GM12878 (cell line): ENCODE measurements at regions of chr2 and their contacts with region 1.

Region 1: DNA sequence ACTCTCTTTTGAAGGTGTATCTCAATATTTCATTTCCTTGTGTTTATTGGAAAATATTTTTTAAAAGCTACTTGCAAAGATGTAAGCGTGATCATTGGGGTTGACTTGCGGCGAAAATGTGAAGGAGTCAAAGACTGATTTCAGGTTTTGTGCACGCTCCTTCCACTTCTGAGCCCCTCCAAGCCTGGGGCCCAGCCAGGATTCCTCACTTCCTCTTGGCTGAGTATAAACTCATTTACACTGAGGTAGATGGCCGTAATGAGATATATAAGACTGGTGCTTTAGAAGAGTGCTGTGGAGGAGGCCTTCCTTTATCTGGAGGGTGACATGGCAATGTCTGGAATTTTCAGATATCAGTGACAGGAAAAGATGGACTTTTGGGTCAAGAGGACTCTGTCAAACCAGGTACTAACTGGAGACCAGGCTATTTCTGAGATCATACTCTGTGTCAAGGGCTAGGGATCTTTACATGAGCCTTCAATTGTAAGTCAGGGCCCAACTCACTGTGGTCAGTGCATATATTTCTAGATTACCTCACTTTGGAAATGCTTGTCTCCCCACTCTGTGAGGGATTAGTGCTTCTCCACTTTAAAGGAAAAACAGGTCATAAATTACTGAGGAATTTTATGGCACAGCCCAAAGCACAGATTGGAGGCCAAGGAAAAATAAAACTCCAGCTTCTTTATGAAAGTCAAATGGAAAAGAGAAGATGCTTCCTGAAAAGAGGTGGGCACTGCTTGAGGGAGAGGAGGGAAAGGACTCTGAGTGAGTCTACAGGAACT is 22.8 kb downstream of the PRKCE start:
- DNase-seq: no peak
- ATAC-seq: no peak
- H3K4me3 ChIP-seq: no peak overlapping the region
- H3K27ac ChIP-seq: no peak overlapping the region
- H3K4me1 ChIP-seq: no peaks in the 10 kb centered on the region
- H3K27me3 ChIP-seq: no peaks in the 10 kb centered on the region
- CTCF ChIP-seq: no peak
- EP300 ChIP-seq: no peak
- POLR2A ChIP-seq: no peak
- RAD21 ChIP-seq: no peak

Region 2: DNA sequence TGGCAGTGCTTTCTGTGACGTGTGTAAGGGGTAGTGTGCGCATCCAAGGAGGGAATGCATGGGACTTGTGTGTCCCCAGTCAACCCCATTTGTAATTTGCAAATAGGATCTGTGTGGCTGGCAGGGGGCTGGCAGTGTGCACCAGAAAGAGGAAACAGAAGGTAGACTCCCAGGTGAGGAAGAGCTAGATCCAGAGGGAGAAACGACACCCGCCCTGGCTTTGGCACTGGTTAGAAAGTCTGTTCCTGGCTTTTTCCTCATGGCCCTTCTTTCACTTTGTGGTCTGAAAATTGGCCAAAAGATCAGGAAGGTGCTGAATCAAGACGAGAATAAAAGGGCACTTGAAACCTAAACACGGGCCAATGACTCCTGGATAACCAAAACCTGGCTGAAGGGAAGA is 10.5 kb after region 1 on chr2:
- CTCF ChIA-PET with region 1: interaction called, 4 read pairs
- POLR2A ChIA-PET with region 1: interaction called, 5 read pairs
- RAD21 ChIA-PET with region 1: no interaction called
- SMC1A ChIA-PET with region 1: interaction called, 12 read pairs
- in situ Hi-C with region 1: no loop called
- intact Hi-C with region 1: no loop called
- DNase-seq: no peak
- ATAC-seq: no peak
- H3K4me3 ChIP-seq: no peak overlapping the region
- H3K27ac ChIP-seq: no peak overlapping the region
- H3K4me1 ChIP-seq: peaks cover 6% of the 10 kb centered on the region
- H3K27me3 ChIP-seq: no peaks in the 10 kb centered on the region
- CTCF ChIP-seq: no peak
- EP300 ChIP-seq: no peak
- POLR2A ChIP-seq: no peak
- RAD21 ChIP-seq: no peak